Mammary epithelial cell (primary cell): ENCODE measurements at regions of chr7 and their contacts with region 1.

Region 1: DNA sequence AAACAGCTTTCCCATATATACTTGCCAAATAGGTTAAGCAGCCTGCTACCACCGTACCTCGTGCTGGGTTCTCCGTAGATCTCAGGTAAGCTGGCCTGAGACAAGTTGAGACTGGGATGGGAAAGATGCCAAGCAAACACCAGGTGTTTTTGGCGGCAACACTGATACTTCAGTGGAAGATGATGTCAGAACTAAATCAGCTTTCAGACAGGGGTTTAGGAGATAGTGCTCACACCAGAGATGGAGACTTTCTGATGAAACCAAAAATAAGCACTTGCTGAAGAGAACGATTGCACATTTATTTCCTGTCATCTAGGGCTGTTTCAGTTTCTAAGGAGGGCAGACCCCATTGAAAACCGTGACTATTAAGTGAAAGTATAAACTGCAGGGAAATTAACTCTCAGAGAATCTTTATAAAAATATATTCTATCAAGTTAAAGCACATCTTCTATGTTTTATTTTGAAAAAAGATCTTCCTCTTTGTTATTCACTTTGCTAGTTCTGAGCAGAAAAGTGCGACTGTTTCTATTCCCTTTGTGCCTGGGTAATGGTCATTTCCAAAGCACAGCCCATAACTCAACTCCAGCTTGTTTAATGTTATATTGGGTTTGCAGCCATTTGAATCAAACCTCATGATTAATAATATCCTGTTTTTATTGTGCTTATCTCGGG is 149.9 kb downstream of the CPED1 start:
- DNase-seq: peak; percentile 64
- H3K4me3 ChIP-seq: no peak overlapping the region
- H3K27ac ChIP-seq: no peak overlapping the region
- H3K4me1 ChIP-seq: peaks cover 5% of the 10 kb centered on the region
- H3K27me3 ChIP-seq: no peaks in the 10 kb centered on the region
- CTCF ChIP-seq: no peak

Region 2: GRCh38 chr7:121329191-121330052 is 191.0 kb after region 1 on chr7:
- CTCF ChIA-PET with region 1: no interaction called
- dilution Hi-C with region 1: no loop called
- in situ Hi-C with region 1: loop called (anchors 25 kb)
- intact Hi-C with region 1: no loop called
- DNase-seq: peak; percentile 37
- H3K4me3 ChIP-seq: peak overlapping the region; percentile 40 to 45 (median 41)
- H3K27ac ChIP-seq: no peak overlapping the region
- H3K4me1 ChIP-seq: peaks cover 16% of the 10 kb centered on the region
- H3K27me3 ChIP-seq: peaks cover 4% of the 10 kb centered on the region
- CTCF ChIP-seq: peak in 1 of 2 donors; percentile 46

Region 3: DNA sequence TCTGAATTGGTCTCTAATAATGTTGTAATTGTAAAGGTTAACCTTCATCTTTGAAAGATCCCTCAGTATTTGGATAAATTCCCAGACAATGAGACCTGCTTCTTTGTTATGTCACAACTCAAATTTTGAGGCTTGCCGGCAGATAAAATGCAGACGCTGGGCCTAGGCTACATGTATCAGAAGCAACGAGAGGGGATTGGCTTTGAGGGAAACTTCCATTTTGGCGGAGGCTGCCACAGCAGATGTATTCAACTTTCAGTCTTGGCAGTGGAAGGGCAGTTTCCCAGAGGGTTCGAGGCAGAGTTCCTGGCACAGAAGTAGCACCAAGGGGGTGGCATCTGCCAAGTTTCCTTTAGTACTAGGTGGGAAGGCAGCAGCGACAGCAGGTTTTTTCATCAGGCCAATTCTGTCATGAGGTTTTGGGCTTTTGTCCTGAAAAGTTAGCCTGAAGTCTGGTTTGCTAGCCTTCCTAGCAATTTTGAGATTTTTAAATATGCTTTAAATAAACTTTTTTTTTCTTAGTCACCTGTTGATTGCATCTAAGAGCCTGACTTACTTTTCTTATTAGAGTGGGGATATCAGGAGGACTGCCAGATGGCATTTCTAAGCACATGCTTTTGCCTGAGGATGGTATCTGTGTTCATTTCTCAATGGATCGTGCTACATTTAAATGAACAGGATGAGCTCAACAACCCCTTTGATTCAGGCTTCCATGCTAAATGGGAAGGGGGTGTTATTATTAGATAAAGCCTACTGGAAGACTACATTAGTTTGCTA is 347.3 kb after region 1 on chr7:
- CTCF ChIA-PET with region 1: no interaction called
- dilution Hi-C with region 1: no loop called
- in situ Hi-C with region 1: no loop called
- intact Hi-C with region 1: no loop called
- DNase-seq: peak; percentile 31
- H3K4me3 ChIP-seq: no peak overlapping the region
- H3K27ac ChIP-seq: no peak overlapping the region
- H3K4me1 ChIP-seq: peaks cover 12% of the 10 kb centered on the region
- H3K27me3 ChIP-seq: no peaks in the 10 kb centered on the region
- CTCF ChIP-seq: no peak

Region 4: GRCh38 chr7:121563177-121563576 is 424.8 kb after region 1 on chr7:
- CTCF ChIA-PET with region 1: no interaction called
- dilution Hi-C with region 1: no loop called
- in situ Hi-C with region 1: loop called in 1 of 2 experiments (anchors 25 kb)
- intact Hi-C with region 1: no loop called
- DNase-seq: no peak
- H3K4me3 ChIP-seq: no peak overlapping the region
- H3K27ac ChIP-seq: no peak overlapping the region
- H3K4me1 ChIP-seq: no peaks in the 10 kb centered on the region
- H3K27me3 ChIP-seq: no peaks in the 10 kb centered on the region
- CTCF ChIP-seq: peak; percentile 44 to 52